OCI-LY7 (cell line): ENCODE measurements at regions of chr3 and their contacts with region 1.

Region 1: DNA sequence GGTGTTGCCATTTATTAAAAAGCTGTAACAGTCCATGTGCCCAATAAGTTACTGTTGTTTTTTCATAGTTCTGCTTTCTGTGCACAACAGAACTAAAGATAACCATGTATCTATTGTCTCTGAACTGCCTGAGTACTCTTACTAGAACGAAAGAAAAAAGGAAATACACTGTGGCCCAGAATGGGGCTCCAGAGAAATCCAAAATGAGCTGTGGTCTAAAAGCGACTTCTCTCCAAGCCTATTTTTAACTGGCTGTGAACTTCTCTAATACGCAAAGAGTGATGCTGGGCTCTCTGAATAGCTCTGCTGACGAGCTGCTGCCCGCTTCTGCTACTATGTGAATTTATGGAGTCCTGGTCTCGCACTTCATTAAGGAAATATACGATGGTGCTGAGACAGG is 56.2 kb upstream of the LPP start:
- DNase-seq: peak; percentile 90
- H3K4me3 ChIP-seq: peak overlapping the region; percentile 41
- H3K27ac ChIP-seq: peak overlapping the region; percentile 81
- H3K4me1 ChIP-seq: peaks cover 52% of the 10 kb centered on the region
- CTCF ChIP-seq: no peak

Region 2: GRCh38 chr3:187963677-187964385 is 134.0 kb before region 1 on chr3:
- CTCF ChIA-PET with region 1: no interaction called
- POLR2A ChIA-PET with region 1: interaction called, 15 read pairs
- intact Hi-C with region 1: no loop called
- DNase-seq: peak; percentile 48
- H3K4me3 ChIP-seq: peak overlapping the region; percentile 1
- H3K27ac ChIP-seq: peak overlapping the region; percentile 99
- H3K4me1 ChIP-seq: peaks cover 100% of the 10 kb centered on the region
- CTCF ChIP-seq: no peak

Region 3: DNA sequence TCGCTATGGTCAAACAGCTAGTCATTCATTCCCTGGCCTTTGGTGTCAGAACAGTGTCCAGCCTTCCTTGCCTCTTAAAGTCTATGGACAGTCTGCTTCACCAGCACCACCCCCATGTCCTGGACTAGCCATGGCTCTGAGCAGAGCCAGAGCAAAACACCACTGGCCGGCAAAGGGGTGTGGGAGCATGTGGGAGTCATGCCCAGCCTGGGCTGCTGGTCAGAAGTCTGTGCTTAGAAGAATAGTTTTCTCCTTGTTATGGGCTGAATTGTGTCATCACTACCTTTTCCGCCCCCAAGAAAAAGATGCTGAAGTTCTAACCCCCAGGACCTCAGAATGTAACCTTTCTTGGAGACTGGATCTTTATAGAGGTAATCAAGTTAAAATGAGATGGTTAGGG is 76.8 kb before region 1 on chr3:
- CTCF ChIA-PET with region 1: no interaction called
- POLR2A ChIA-PET with region 1: no interaction called
- intact Hi-C with region 1: no loop called
- DNase-seq: no peak
- H3K4me3 ChIP-seq: no peak overlapping the region
- H3K27ac ChIP-seq: no peak overlapping the region
- H3K4me1 ChIP-seq: peaks cover 2% of the 10 kb centered on the region
- CTCF ChIP-seq: no peak

Region 4: DNA sequence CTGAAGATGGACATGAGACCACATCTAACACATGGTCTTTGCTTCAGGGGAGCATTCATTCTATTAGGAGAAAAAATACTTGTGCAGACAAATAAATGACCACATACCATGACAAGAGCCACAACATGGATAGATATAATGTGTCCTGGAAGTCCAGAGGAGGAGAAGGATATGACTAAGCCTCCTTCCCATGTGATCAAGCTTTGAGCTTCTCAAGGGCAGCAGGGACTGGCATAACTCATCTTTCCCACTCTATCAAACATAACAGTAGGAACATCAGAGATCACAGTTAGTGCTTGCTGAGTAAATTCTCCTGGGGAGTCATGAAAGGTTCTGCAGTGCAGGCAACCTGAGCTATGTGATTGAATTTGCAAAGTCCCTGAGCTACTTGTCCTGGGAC is 29.9 kb before region 1 on chr3:
- CTCF ChIA-PET with region 1: no interaction called
- POLR2A ChIA-PET with region 1: no interaction called
- intact Hi-C with region 1: no loop called
- DNase-seq: no peak
- H3K4me3 ChIP-seq: no peak overlapping the region
- H3K27ac ChIP-seq: no peak overlapping the region
- H3K4me1 ChIP-seq: peaks cover 30% of the 10 kb centered on the region
- CTCF ChIP-seq: no peak

Region 5: DNA sequence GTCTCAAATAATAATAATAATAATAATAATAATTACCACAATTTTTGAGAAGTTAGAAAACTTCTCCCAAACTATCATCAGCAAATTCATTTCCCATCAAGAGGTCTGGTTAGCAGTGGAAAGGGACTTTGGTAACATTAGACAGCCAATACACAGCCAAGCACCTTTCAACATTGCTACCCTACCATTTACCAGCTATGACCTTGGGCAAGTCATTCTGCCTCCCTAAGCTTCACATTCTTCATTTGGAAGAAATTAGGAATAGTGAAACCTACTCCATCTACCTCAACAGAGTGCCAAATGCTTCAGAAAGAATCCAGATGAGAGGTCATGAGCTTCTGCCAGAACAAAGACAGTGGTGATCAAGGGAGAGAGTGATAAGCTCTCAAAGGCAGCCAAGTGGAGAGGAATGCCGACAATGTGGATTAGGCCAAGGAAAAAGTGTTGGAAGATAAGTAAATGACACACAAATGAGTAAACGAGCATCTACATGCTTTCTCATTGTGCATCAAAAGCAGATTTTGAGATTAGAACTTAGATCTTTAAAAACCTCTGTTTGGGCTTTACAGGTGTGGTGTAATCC is 13.3 kb after region 1 on chr3:
- CTCF ChIA-PET with region 1: interaction called, 3 read pairs
- POLR2A ChIA-PET with region 1: interaction called, 11 read pairs
- intact Hi-C with region 1: no loop called
- DNase-seq: no peak
- H3K4me3 ChIP-seq: no peak overlapping the region
- H3K27ac ChIP-seq: no peak overlapping the region
- H3K4me1 ChIP-seq: peaks cover 57% of the 10 kb centered on the region
- CTCF ChIP-seq: no peak

Region 6: GRCh38 chr3:188137051-188137450 is 39.3 kb after region 1 on chr3:
- CTCF ChIA-PET with region 1: no interaction called
- POLR2A ChIA-PET with region 1: interaction called, 14 read pairs
- intact Hi-C with region 1: no loop called
- DNase-seq: peak; percentile 49
- H3K4me3 ChIP-seq: no peak overlapping the region
- H3K27ac ChIP-seq: no peak overlapping the region
- H3K4me1 ChIP-seq: peaks cover 14% of the 10 kb centered on the region
- CTCF ChIP-seq: no peak